B cell (primary cell): ENCODE measurements at regions of chr9 and their contacts with region 1.

Region 1: DNA sequence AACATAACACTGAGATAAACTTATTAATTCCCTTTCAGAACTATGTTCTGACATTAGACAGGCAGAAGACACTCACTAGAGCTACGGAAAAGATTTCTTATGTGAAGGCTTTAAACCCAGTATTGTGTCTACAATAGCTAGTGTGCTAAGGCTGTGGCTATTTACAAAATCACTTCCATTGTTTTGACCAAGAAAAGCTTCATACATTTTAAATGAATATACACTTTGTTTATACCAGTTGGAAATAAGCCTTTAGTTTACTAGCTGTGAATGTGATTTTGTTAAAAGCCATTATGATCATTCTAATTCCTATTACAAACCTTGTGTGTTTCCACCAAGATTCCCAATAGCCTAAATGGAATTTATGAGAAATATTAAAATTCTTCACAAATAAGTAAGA is 83.0 kb downstream of the AGTPBP1 start:
- DNase-seq: no peak
- ATAC-seq: no peak
- H3K4me3 ChIP-seq: no peak overlapping the region
- H3K4me3 Mint-ChIP-seq: no peak overlapping the region
- H3K27ac ChIP-seq: no peak overlapping the region
- H3K27ac Mint-ChIP-seq: no peak overlapping the region
- H3K4me1 ChIP-seq: no peaks in the 10 kb centered on the region
- H3K4me1 Mint-ChIP-seq: no peaks in the 10 kb centered on the region
- H3K27me3 ChIP-seq: no peaks in the 10 kb centered on the region
- H3K27me3 Mint-ChIP-seq: no peaks in the 10 kb centered on the region
- CTCF ChIP-seq: no peak

Region 2: GRCh38 chr9:85200726-85201404 is 457.9 kb before region 1 on chr9:
- CTCF ChIA-PET with region 1: no interaction called
- POLR2A ChIA-PET with region 1: no interaction called
- intact Hi-C with region 1: no loop called
- DNase-seq: no peak
- ATAC-seq: no peak
- H3K4me3 ChIP-seq: no peak overlapping the region
- H3K4me3 Mint-ChIP-seq: no peak overlapping the region
- H3K27ac ChIP-seq: no peak overlapping the region
- H3K27ac Mint-ChIP-seq: no peak overlapping the region
- H3K4me1 ChIP-seq: no peaks in the 10 kb centered on the region
- H3K4me1 Mint-ChIP-seq: no peaks in the 10 kb centered on the region
- H3K27me3 ChIP-seq: no peaks in the 10 kb centered on the region
- H3K27me3 Mint-ChIP-seq: no peaks in the 10 kb centered on the region
- CTCF ChIP-seq: no peak

Region 3: GRCh38 chr9:85640425-85640824 is 18.3 kb before region 1 on chr9:
- CTCF ChIA-PET with region 1: no interaction called
- POLR2A ChIA-PET with region 1: no interaction called
- intact Hi-C with region 1: loop called (anchors 1 kb)
- DNase-seq: no peak
- ATAC-seq: no peak
- H3K4me3 ChIP-seq: no peak overlapping the region
- H3K4me3 Mint-ChIP-seq: no peak overlapping the region
- H3K27ac ChIP-seq: no peak overlapping the region
- H3K27ac Mint-ChIP-seq: no peak overlapping the region
- H3K4me1 ChIP-seq: no peaks in the 10 kb centered on the region
- H3K4me1 Mint-ChIP-seq: peaks cover 2% of the 10 kb centered on the region
- H3K27me3 ChIP-seq: no peaks in the 10 kb centered on the region
- H3K27me3 Mint-ChIP-seq: no peaks in the 10 kb centered on the region
- CTCF ChIP-seq: no peak

Region 4: DNA sequence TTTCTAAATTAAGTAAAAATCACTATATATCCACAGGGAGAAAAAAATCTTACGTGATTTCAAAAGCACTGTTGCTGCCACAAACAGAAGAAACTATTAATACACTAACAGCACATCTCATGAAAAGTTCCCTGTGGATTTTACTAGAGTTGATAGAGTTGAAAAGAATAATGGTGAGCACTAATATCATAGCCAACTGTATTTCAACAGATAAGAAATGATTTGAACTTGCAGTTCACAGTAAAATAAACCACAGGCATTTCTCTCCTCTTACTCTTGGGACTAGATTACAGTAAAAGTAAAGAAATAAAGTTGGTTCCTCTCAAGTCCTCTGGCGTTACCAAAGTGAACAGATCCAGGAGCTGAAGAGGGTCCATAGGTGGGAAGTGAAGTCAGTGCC is 55.2 kb after region 1 on chr9:
- CTCF ChIA-PET with region 1: no interaction called
- POLR2A ChIA-PET with region 1: no interaction called
- intact Hi-C with region 1: no loop called
- DNase-seq: no peak
- ATAC-seq: no peak
- H3K4me3 ChIP-seq: no peak overlapping the region
- H3K4me3 Mint-ChIP-seq: no peak overlapping the region
- H3K27ac ChIP-seq: no peak overlapping the region
- H3K27ac Mint-ChIP-seq: no peak overlapping the region
- H3K4me1 ChIP-seq: peaks cover 19 to 25% of the 10 kb centered on the region in 2 donors
- H3K4me1 Mint-ChIP-seq: peaks cover 33% of the 10 kb centered on the region
- H3K27me3 ChIP-seq: no peaks in the 10 kb centered on the region
- H3K27me3 Mint-ChIP-seq: no peaks in the 10 kb centered on the region
- CTCF ChIP-seq: no peak

Region 5: DNA sequence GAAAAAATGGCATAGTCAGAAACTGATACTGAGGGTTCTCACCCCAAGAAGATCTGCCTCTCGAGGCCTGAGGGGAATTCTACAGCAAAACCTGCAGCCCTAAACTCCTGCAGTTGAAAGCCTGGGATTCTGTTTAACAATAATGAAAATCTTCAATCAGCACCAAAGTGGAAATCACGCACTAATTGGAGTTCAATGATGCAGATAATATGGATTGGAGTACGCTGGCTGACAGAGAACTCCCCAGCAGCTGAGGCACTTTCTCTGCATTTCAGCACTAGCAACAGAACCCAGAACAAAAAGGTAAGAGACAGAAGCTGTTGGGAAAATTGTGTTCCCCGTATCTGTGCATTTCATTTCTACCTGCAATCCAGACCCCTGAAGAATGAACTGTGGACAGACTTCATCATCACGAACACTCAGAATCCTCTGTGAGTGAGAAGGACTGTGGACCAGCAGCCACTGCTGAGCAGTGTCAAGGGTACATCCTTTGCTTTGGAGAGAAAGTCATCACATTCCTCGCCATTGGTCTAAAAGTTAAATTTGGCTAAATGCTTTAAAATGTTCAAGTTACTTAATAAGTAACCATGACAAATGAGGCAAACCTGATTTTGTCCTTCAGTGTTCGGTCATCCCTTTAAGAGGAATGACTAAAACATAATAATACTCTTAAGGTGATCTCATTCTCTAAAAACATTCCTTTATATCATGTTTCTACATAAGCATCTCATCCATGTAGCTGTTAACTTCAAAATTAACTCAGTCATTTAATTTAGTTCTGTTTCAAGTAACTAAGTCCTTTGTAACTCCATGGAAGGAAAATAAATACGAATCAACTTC is 1162.5 kb after region 1 on chr9:
- CTCF ChIA-PET with region 1: no interaction called
- POLR2A ChIA-PET with region 1: no interaction called
- intact Hi-C with region 1: no loop called
- DNase-seq: no peak
- ATAC-seq: no peak
- H3K4me3 ChIP-seq: no peak overlapping the region
- H3K4me3 Mint-ChIP-seq: no peak overlapping the region
- H3K27ac ChIP-seq: no peak overlapping the region
- H3K27ac Mint-ChIP-seq: no peak overlapping the region
- H3K4me1 ChIP-seq: no peaks in the 10 kb centered on the region
- H3K4me1 Mint-ChIP-seq: no peaks in the 10 kb centered on the region
- H3K27me3 ChIP-seq: no peaks in the 10 kb centered on the region
- H3K27me3 Mint-ChIP-seq: no peaks in the 10 kb centered on the region
- CTCF ChIP-seq: no peak